Right ventricle myocardium superior (tissue), 1 donor: ENCODE measurements at regions of chr12 and their contacts with region 1.

Region 1: DNA sequence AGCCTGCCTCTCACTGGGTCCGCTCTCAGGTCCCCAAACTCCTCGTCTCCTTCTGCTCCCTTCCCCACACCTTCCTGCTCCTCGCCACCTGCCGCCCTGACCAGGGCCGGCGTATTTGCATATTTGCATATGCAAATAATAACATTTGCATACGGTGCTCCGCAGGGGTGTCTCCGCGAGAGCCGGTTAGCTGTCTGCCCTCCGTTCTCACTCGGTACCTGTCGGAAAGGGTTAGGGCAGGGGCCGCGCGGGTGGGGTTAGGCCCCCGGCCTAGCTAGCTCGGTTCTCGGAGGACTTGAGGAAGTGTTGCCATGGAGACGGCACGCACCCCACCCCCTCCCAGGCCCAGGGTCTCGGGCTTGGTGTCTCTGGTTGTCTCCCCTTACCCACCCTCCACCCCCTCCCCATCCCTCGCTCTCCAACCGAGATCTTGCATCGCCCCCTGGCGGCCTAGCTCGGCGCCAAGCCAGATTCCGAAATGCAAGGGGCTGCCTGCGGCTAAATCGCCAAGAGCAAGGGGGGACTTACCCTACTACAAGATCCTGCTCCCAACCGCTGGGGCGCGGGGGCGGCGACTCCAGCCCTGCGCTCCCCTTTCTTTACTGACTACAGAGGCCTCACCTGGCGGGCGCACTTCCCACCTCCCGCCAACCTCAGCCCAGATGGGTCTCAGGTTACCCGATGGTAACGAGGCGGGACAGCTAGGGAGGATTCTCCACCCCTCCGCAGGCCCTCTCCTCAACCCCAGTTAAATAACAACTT is 8.1 kb downstream of the STAC3 start:
- DNase-seq: peak; percentile 73
- ATAC-seq: peak; percentile 8

Region 2: GRCh38 chr12:57213058-57213715 is 29.7 kb before region 1 on chr12:
- intact Hi-C with region 1: loop called (anchors 2 kb)
- DNase-seq: peak; percentile 92
- ATAC-seq: peak; percentile 83